ENCODE measurements at regions of chr2 and their contacts with region 1.

Region 1: DNA sequence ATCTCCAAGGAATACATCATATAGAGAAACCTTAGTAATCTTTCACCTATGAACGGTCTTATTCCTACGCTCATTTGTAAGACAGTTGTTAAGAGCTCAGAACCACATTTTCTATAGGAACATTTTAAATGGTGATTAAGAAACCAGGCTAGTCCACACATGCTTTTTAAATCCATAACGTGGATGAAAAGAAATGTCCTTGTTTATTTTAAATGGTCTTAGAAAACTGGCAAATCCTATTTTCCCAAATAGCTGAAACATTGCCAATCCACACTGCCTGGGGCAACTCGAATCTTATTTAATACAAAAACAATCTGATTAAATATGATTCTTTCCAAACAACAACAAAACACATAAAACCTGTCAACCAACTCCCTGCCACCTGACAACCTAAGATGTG is 23.7 kb downstream of the METTL8 start:
- DNase-seq: peak in 1 of 2 experiments; percentile 21
- H3K4me3 ChIP-seq: no peak overlapping the region
- H3K27ac ChIP-seq: 0 out of 2 replicates have a peak overlapping the region, but pooled peaks have one; percentile 2
- H3K4me1 ChIP-seq: peaks cover 18% of the 10 kb centered on the region
- H3K27me3 ChIP-seq: no peaks in the 10 kb centered on the region
- CTCF ChIP-seq: no peak

Region 2: GRCh38 chr2:171034315-171034714 is 375.8 kb before region 1 on chr2:
- CTCF ChIA-PET with region 1: no interaction called
- POLR2A ChIA-PET with region 1: no interaction called
- intact Hi-C with region 1: loop called (anchors 5 kb)
- DNase-seq: no peak
- H3K4me3 ChIP-seq: no peak overlapping the region
- H3K27ac ChIP-seq: no peak overlapping the region
- H3K4me1 ChIP-seq: peaks cover 3% of the 10 kb centered on the region; the same call in 1 of the 2 replicates
- H3K27me3 ChIP-seq: no peaks in the 10 kb centered on the region
- CTCF ChIP-seq: no peak

Region 3: GRCh38 chr2:171630812-171631626 is 220.9 kb after region 1 on chr2:
- CTCF ChIA-PET with region 1: no interaction called
- POLR2A ChIA-PET with region 1: no interaction called
- intact Hi-C with region 1: no loop called
- DNase-seq: no peak
- H3K4me3 ChIP-seq: no peak overlapping the region
- H3K27ac ChIP-seq: no peak overlapping the region
- H3K4me1 ChIP-seq: no peaks in the 10 kb centered on the region
- H3K27me3 ChIP-seq: peaks cover 47% of the 10 kb centered on the region
- CTCF ChIP-seq: no peak

Measured in PC-9 (cell line).